ENCODE measurements at regions of chr2 and their contacts with region 1.

Region 1: DNA sequence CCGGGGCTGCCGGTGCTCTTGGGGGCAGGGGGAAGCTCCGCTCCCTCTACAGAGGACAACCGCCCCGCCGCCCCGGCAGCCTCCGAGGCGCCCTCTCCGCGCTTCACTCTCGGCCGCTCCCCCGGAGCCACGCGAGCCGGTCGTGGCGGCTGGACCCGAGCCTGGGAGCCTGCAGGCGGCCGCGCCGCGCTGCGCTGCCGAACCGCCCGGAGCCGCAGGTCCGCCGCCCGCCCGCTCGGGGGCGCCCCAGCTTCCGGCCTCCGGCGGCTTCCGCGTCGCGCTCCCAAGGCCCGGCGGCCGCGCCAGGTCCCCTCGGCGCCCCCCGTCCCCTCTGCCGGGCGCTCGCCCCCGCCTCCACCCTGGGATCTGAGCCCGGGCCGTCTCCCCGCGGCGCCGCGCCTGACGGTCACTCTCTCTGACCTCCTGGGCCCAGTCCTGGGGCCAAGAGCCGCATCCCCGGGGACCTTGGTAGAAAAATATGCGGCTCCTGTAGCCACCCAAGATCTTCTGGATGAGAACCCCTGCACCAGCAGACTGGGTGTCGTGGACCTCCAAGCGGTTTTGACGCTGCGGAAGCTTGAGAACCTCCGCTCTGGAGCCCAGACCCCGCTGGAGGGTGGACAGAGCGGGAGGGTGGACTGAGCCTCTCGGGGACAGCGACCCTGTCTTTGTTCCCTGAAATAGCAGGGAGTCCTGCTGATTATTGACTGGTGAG is 44.3 kb downstream of the SERTAD2 start:
- DNase-seq: peak; percentile 58 to 79 (median 76)
- H3K4me3 ChIP-seq: peak overlapping the region in 1 of 2 donors; percentile 61
- H3K4me3 Mint-ChIP-seq: peak overlapping the region; percentile 64 to 79 (median 75)
- H3K27ac ChIP-seq: peak overlapping the region; percentile 57
- H3K27ac Mint-ChIP-seq: peak overlapping the region; percentile 35 to 83 (median 70)
- H3K4me1 ChIP-seq: peaks cover 38% of the 10 kb centered on the region
- H3K4me1 Mint-ChIP-seq: peaks cover 10 to 33% (median 22%) of the 10 kb centered on the region in 4 donors
- H3K27me3 ChIP-seq: no peaks in the 10 kb centered on the region
- H3K27me3 Mint-ChIP-seq: no peaks in the 10 kb centered on the region

Region 2: GRCh38 chr2:64538764-64539433 is 70.5 kb before region 1 on chr2:
- CTCF ChIA-PET with region 1: no interaction called
- POLR2A ChIA-PET with region 1: no interaction called
- intact Hi-C with region 1: no loop called
- DNase-seq: no peak
- H3K4me3 ChIP-seq: no peak overlapping the region
- H3K4me3 Mint-ChIP-seq: peak overlapping the region in 4 of 8 donors; percentile 5 to 49 (median 15)
- H3K27ac ChIP-seq: no peak overlapping the region
- H3K27ac Mint-ChIP-seq: no peak overlapping the region
- H3K4me1 ChIP-seq: peaks cover 61% of the 10 kb centered on the region
- H3K4me1 Mint-ChIP-seq: peaks cover 55 to 75% (median 65%) of the 10 kb centered on the region in 4 donors
- H3K27me3 ChIP-seq: no peaks in the 10 kb centered on the region
- H3K27me3 Mint-ChIP-seq: no peaks in the 10 kb centered on the region

Region 3: GRCh38 chr2:64551851-64552250 is 57.5 kb before region 1 on chr2:
- CTCF ChIA-PET with region 1: no interaction called
- POLR2A ChIA-PET with region 1: no interaction called
- intact Hi-C with region 1: no loop called
- DNase-seq: no peak
- H3K4me3 ChIP-seq: no peak overlapping the region
- H3K4me3 Mint-ChIP-seq: peak overlapping the region in 1 of 8 donors; percentile 2
- H3K27ac ChIP-seq: no peak overlapping the region
- H3K27ac Mint-ChIP-seq: peak overlapping the region in 1 of 7 donors; percentile 4
- H3K4me1 ChIP-seq: no peaks in the 10 kb centered on the region
- H3K4me1 Mint-ChIP-seq: peaks cover 4 to 27% (median 11%) of the 10 kb centered on the region in 4 donors
- H3K27me3 ChIP-seq: no peaks in the 10 kb centered on the region
- H3K27me3 Mint-ChIP-seq: no peaks in the 10 kb centered on the region

Region 4: GRCh38 chr2:64586883-64587481 is 22.4 kb before region 1 on chr2:
- CTCF ChIA-PET with region 1: interaction called, 20 read pairs
- POLR2A ChIA-PET with region 1: no interaction called
- intact Hi-C with region 1: no loop called
- DNase-seq: peak in 4 of 5 donors; percentile 26 to 46 (median 38)
- H3K4me3 ChIP-seq: no peak overlapping the region
- H3K4me3 Mint-ChIP-seq: no peak overlapping the region
- H3K27ac ChIP-seq: no peak overlapping the region
- H3K27ac Mint-ChIP-seq: no peak overlapping the region
- H3K4me1 ChIP-seq: no peaks in the 10 kb centered on the region
- H3K4me1 Mint-ChIP-seq: peaks cover 0 to 4% (median 2%) of the 10 kb centered on the region in 4 donors
- H3K27me3 ChIP-seq: no peaks in the 10 kb centered on the region
- H3K27me3 Mint-ChIP-seq: no peaks in the 10 kb centered on the region

Region 5: DNA sequence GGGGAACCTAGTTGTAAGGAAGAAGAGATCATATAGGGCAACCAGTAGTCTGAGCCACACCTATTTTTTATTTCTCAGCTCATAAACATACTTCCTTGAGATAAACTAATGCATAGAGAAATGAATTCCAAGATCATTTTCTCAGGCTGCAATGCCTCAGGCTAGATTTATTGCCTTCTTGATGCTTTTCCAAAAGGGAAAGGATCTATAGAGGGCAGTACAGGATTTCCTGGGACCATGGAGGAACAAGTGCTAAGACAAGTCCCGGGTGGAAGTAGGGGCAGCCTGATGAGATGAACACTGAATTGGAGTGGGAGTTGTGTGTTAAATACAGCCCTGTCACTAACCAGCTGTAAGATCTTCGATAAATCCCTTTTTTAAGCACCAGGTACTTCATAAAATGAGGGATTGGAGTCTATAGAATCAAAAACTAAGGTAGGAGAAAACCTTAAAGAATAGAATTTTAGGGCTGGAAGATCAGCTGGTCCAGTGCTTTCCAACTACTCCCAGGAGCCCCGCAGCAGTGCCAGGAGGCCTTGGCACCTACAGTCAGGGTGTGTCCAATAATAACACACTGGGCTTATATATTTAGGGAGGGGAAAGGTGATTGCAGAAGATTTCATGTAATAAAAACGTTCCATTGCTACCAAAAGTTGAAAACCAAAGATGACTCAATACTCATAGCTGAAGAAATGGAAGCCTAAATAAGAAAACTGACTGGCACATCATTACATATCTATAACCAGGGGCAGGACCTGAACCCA is 13.8 kb before region 1 on chr2:
- CTCF ChIA-PET with region 1: interaction called, 4 read pairs
- POLR2A ChIA-PET with region 1: interaction called, 13 read pairs
- intact Hi-C with region 1: no loop called
- DNase-seq: no peak
- H3K4me3 ChIP-seq: no peak overlapping the region
- H3K4me3 Mint-ChIP-seq: no peak overlapping the region
- H3K27ac ChIP-seq: no peak overlapping the region
- H3K27ac Mint-ChIP-seq: no peak overlapping the region
- H3K4me1 ChIP-seq: no peaks in the 10 kb centered on the region
- H3K4me1 Mint-ChIP-seq: peaks cover 5 to 14% (median 8%) of the 10 kb centered on the region in 4 donors
- H3K27me3 ChIP-seq: no peaks in the 10 kb centered on the region
- H3K27me3 Mint-ChIP-seq: no peaks in the 10 kb centered on the region

Region 6: DNA sequence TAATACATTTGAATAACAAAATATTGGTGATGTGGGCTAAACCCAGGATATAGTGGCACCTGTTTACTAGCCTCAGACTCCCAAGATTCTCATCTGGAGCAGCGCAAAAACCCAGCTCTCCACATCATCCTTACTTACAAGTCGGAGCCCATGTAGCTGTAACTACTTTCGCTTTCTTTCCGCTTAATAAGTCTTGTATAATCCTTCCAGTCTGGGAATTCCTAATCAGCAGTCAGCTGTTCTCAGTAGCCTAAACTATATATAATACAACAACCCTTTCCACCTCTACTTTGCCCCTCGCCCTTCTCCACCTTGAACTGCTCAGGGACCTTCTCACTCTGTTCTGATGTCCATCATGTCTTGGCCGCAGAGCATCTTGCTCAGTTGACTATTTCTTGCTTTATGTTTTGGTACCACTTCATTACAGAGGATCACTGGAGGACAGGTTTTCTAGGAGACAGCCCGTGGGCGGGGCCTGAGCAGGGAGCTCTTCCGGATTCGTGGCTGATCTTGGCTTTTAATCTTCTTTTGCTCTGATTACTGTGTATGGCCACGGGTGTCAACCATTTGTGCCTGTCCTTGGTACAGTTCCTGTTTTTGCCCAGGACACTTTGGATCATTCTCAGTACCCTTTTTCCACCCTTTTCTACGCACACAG is 164.2 kb after region 1 on chr2:
- CTCF ChIA-PET with region 1: no interaction called
- POLR2A ChIA-PET with region 1: no interaction called
- intact Hi-C with region 1: no loop called
- DNase-seq: no peak
- H3K4me3 ChIP-seq: no peak overlapping the region
- H3K4me3 Mint-ChIP-seq: no peak overlapping the region
- H3K27ac ChIP-seq: no peak overlapping the region
- H3K27ac Mint-ChIP-seq: no peak overlapping the region
- H3K4me1 ChIP-seq: peaks cover 3% of the 10 kb centered on the region
- H3K4me1 Mint-ChIP-seq: peaks cover 3 to 5% (median 4%) of the 10 kb centered on the region in 4 donors
- H3K27me3 ChIP-seq: no peaks in the 10 kb centered on the region
- H3K27me3 Mint-ChIP-seq: no peaks in the 10 kb centered on the region

Region 7: GRCh38 chr2:64978514-64979268 is 369.3 kb after region 1 on chr2:
- CTCF ChIA-PET with region 1: no interaction called
- POLR2A ChIA-PET with region 1: no interaction called
- intact Hi-C with region 1: no loop called
- DNase-seq: peak in 4 of 5 donors; percentile 12 to 19 (median 17)
- H3K4me3 ChIP-seq: no peak overlapping the region
- H3K4me3 Mint-ChIP-seq: no peak overlapping the region
- H3K27ac ChIP-seq: no peak overlapping the region
- H3K27ac Mint-ChIP-seq: no peak overlapping the region
- H3K4me1 ChIP-seq: no peaks in the 10 kb centered on the region
- H3K4me1 Mint-ChIP-seq: no peaks in the 10 kb centered on the region
- H3K27me3 ChIP-seq: no peaks in the 10 kb centered on the region
- H3K27me3 Mint-ChIP-seq: no peaks in the 10 kb centered on the region